Ascending aorta (tissue), 2 donors: ENCODE measurements at regions of chr9 and their contacts with region 1.

Region 1: DNA sequence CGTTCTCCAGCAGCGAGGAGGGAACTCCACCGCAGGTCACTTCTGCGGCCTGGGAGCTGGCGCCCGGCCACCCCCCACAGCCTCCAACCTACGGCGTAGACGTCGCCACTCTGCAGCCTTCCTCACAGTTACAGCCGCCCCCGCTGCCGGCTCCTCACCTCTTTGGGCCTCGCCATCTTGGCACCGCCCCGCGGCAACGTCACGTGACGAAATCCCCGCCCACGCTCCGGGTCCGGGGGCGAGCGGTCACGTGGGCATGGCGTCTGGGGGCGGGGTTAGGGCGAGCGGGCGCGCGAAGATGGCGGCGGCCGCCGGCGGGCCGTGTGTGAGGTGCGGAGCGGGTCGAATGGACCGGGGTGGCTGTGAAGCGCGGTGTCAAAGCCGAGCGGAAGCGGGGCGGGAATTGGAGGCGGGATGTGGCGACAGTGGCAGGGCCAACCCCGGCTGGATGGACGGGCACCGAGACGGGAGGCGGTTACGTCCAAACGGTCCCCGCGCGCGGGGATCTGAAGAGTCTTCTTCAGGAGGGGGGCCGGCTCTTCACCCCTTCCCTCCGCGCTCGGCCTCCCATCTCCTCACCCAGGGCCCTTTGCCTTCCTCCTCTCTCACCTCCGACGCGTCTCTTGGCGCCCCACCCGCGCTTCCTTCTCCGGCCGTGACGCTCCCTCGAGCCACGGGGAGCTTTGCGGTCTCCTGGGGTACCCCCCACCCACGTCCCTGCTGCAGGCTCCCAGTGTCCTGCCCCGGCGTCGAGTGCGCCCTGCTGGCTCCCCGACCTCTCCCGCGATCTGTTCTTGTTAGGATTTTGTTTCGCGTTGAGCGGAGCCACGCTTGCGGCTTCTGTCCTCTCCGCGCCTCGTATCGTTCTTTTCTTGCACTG is at the starts of genes DOLK and NUP188:
- DNase-seq: peak; percentile 82 to 98
- H3K4me3 ChIP-seq: peak within 1 kb of the TSS; percentile 73 to 88
- H3K27ac ChIP-seq: peak within 1 kb of the TSS; percentile 92 to 96
- H3K4me1 ChIP-seq: peaks cover 5 to 20% of the 10 kb centered on the region in 2 donors
- H3K27me3 ChIP-seq: no peaks in the 10 kb centered on the region
- CTCF ChIP-seq: peak in 1 of 3 experiments; percentile 2
- total RNA-seq, gene DOLK: 5.0 TPM
- total RNA-seq, gene NUP188: 45.0 TPM

Region 2: DNA sequence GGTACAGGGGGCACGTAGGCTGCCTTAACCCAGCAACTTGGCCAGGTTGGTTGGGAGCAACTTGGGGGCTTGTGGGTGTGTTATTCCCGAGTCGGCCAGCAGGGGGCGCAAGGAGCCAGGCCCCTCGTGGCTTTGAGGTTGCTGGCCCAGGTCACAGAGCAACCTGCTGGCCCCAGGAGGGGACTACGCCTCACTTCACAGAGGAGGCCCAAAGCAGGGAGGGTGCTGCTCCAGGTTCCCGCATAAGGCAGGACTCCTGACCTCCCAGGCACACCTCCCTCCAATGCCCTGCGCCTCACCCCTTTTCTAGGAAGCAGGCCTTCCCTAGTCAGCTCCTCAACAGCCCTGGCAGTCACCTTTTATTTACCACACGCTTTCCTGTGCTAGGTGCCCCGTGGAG is 84.0 kb before region 1 on chr9:
- intact Hi-C with region 1: loop called (anchors 1 kb)
- DNase-seq: peak in 1 of 2 donors; percentile 84
- H3K4me3 ChIP-seq: no peak overlapping the region
- H3K27ac ChIP-seq: no peak overlapping the region
- H3K4me1 ChIP-seq: peaks cover 0 to 8% of the 10 kb centered on the region in 2 donors
- H3K27me3 ChIP-seq: no peaks in the 10 kb centered on the region
- CTCF ChIP-seq: peak; percentile 93 to 95 (median 94)

Region 3: DNA sequence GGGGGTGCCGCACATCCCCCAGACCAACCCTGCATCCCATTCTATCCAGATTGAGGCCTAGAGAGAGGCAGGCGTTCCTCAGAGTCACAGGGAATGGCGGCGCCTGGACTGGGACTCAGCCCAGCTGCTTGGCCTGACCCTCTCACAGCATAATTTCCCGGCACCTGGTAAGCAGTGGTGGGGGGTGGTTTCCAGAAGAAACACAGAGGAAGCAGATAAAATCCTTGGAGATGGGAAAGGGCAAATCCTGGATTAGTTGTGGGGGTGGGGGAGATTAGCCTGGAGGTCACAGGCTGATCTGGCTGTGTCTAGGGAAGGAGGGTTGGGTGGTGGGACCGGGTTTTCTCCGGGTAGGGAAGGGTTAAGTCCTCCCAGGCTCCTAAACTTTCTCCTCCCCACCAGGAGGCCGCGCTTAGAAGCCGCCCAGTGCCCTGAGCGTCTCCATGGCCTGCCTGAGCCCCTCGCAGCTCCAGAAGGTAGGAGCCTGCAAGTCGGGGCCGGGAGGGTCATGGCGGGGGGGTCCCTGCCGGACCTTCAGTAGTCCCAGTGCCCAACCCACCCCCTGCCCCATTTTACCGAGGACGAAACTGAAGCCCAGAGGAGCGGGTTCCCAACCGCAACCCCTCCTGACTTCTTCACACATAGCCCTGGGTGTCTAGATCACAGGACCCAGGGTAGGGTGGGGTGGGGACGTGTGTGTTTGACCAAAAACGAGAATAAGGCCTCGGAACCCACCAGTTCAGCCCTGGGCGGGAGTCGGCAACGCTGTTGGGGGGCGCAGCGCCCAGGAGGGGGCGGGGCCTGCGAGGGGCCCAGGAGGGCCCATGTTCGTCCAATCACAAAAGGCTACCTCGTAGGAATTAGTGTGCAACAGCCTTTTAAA is 25.5 kb before region 1 on chr9:
- intact Hi-C with region 1: loop called (anchors 2 kb)
- DNase-seq: peak in 1 of 2 donors; percentile 80
- H3K4me3 ChIP-seq: peak overlapping the region; percentile 59 to 73
- H3K27ac ChIP-seq: peak overlapping the region; percentile 94 to 95
- H3K4me1 ChIP-seq: peaks cover 21 to 52% of the 10 kb centered on the region in 2 donors
- H3K27me3 ChIP-seq: no peaks in the 10 kb centered on the region
- CTCF ChIP-seq: peak in 1 of 3 experiments; percentile 4

Region 4: DNA sequence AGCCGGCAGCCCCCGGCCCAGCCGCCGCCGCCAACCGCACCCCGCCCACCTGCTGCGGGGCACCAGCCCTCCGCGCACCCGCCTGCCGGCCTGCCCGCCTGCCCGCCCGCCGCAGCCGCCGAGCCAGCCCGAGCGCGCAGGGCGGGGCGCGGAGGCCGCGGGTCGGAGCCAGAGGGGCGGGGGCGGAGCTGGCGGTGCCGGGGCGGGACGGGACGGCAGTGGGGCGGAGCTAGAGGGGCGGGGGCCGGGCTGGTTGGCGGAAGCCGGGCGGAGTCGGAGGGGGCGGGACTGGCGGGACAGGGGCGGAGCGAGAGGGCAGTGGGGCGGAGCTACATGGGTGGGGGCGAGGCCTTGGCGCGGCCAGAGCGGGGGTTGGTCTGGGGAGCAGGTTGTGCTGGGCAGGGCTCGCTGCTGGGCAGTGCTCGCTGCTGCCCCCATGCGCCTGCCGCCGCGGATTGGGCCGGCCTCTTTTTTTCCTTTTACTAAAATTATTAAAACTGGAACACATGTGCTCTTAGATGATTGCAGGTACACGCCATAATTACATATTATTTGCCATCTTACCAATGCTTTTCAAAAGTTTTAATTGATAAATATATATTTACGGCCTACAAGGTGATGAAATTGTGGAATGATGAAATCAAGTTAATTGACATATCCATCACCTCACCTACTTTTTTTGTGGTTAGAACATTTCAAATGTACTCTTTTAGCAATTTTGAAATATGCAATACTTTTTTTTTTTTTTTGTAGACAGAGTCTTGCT is 80.7 kb after region 1 on chr9 and contains the start of gene SH3GLB2:
- intact Hi-C with region 1: loop called (anchors 5 kb)
- DNase-seq: peak; percentile 74 to 94
- H3K4me3 ChIP-seq: peak within 1 kb of the TSS; percentile 80 to 84
- H3K27ac ChIP-seq: peak within 1 kb of the TSS; percentile 82 to 84
- H3K4me1 ChIP-seq: peaks cover 14 to 24% of the 10 kb centered on the region in 2 donors
- H3K27me3 ChIP-seq: no peaks in the 10 kb centered on the region
- CTCF ChIP-seq: peak; percentile 84 to 95 (median 90)
- total RNA-seq, gene SH3GLB2: 138 TPM

Region 5: DNA sequence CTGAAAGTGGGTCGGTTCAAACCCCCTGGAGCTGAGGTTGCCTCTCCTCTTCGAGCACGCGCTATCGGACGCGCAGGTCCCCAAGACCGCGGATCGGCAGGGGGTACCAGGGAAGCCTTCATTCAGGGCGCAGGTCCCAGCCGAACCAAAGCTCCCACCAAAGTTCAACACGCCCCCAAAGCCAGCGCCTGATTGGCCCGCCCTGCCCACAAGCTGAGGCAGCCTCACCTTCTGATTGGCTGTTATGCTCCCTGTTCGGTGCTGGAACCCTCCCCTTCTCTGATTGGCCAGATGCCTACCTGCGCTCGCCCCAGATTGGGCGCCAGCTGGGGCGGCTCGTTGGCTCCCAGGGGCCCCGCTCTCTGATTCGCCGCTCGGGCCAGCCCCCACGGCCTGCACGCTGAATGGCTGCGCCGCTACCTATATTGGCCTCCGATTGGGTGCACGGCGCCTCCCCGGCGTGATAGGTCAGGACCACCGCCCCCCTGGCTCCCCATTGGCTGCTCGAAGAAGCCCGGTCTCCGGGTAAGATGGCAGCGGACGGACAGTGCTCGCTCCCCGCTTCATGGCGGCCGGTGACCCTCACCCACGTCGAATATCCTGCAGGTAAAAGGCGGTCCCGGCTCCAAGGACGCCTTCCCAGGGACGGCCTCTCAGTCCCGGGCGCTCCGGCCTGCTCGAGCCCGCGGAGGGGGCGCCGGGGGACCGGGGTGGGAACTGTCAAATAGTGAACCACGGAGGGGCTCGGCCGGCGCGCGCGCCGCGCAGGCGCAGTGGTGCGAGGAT is 133.1 kb after region 1 on chr9 and contains the start of gene DOLPP1:
- intact Hi-C with region 1: loop called (anchors 2 kb)
- DNase-seq: peak; percentile 97 to 99
- H3K4me3 ChIP-seq: peak within 1 kb of the TSS; percentile 80 to 94
- H3K27ac ChIP-seq: peak within 1 kb of the TSS; percentile 57 to 81
- H3K4me1 ChIP-seq: peaks cover 0 to 8% of the 10 kb centered on the region in 2 donors
- H3K27me3 ChIP-seq: no peaks in the 10 kb centered on the region
- CTCF ChIP-seq: no peak
- total RNA-seq, gene DOLPP1: 41.7 TPM